Transverse colon (tissue), 4 donors: ENCODE measurements at regions of chr4 and their contacts with region 1.

Region 1: DNA sequence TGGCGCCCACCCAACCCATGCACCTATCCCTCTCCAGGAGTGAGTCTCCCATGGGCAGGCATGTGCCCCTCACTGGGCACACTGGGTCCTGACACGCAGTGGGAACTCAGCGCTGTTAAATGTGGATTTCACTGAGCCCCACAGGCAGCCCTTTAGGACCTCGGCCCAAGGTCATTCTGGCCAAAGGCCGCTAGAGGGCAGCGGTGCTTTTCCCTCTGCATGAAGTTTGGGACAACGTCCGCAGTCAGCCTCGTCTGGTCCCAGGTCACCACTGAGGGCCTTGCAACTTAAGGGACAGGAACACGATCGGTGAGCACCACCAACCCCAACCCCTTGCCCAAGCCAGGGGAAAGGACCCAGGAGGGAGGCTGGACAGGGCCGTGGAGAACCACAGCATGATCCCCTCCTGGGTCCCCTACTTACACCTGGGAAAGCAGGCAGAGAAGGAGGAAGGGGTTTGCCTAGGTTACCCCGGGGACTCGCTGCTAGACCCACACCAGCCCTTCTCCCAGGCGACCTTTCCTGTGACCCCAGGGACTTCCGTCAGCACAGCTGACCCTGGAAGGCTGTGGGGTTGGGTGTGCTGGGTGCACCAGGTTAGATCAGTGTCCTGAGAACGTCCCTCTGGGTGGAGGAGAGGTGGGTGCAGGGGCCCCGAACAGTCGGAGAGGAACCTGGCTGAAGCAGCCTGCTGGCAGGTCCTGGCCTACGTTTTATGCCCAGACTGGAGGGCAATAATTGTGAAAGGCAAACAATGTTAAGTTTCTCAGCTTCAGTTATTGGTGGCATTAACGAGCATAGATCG is 24.0 kb downstream of the CYTL1 start:
- DNase-seq: peak; percentile 66
- H3K4me3 ChIP-seq: no peak overlapping the region
- H3K27ac ChIP-seq: no peak overlapping the region
- H3K4me1 ChIP-seq: peaks cover 5 to 14% (median 9%) of the 10 kb centered on the region in 4 donors
- H3K27me3 ChIP-seq: no peaks in the 10 kb centered on the region
- CTCF ChIP-seq: peak; percentile 75 to 88 (median 82)
- EP300 ChIP-seq: no peak
- POLR2A ChIP-seq: no peak

Region 2: GRCh38 chr4:4935974-4936373 is 59.3 kb before region 1 on chr4:
- in situ Hi-C with region 1: no loop called
- intact Hi-C with region 1: loop called (anchors 2 kb)
- DNase-seq: no peak
- H3K4me3 ChIP-seq: no peak overlapping the region
- H3K27ac ChIP-seq: no peak overlapping the region
- H3K4me1 ChIP-seq: no peaks in the 10 kb centered on the region
- H3K27me3 ChIP-seq: no peaks in the 10 kb centered on the region
- CTCF ChIP-seq: no peak
- EP300 ChIP-seq: no peak
- POLR2A ChIP-seq: no peak

Region 3: GRCh38 chr4:5014007-5014682 is 18.8 kb after region 1 on chr4:
- in situ Hi-C with region 1: no loop called
- intact Hi-C with region 1: no loop called
- DNase-seq: no peak
- H3K4me3 ChIP-seq: no peak overlapping the region
- H3K27ac ChIP-seq: no peak overlapping the region
- H3K4me1 ChIP-seq: peaks cover 0 to 2% (median 0%) of the 10 kb centered on the region in 4 donors
- H3K27me3 ChIP-seq: peaks cover 12% of the 10 kb centered on the region
- CTCF ChIP-seq: no peak
- EP300 ChIP-seq: no peak
- POLR2A ChIP-seq: no peak

Region 4: DNA sequence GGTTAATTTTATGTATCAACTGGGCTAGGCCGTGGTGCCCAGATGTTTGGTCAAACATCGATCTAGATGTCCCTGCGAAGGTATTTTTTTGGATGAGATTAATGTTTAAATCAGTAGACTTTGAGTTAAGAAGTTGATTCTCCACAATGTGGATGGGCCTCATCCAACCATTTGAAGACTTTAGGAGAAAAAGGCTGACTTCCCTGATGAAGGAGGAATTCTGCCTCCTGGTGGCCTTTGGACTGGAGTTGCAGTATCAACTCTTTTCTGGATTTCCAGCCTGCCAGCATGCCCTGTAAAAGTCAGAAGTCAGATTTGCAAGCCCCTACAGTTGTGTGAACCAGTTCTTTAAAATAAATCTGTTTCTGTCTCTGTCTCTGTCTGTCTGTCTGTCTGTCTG is 147.4 kb after region 1 on chr4:
- in situ Hi-C with region 1: no loop called
- intact Hi-C with region 1: loop called (anchors 10 kb)
- DNase-seq: peak; percentile 21
- H3K4me3 ChIP-seq: no peak overlapping the region
- H3K27ac ChIP-seq: no peak overlapping the region
- H3K4me1 ChIP-seq: peaks cover 0 to 4% (median 0%) of the 10 kb centered on the region in 4 donors
- H3K27me3 ChIP-seq: no peaks in the 10 kb centered on the region
- CTCF ChIP-seq: peak in 4 of 5 experiments; percentile 14 to 40 (median 32)
- EP300 ChIP-seq: no peak
- POLR2A ChIP-seq: no peak

Region 5: DNA sequence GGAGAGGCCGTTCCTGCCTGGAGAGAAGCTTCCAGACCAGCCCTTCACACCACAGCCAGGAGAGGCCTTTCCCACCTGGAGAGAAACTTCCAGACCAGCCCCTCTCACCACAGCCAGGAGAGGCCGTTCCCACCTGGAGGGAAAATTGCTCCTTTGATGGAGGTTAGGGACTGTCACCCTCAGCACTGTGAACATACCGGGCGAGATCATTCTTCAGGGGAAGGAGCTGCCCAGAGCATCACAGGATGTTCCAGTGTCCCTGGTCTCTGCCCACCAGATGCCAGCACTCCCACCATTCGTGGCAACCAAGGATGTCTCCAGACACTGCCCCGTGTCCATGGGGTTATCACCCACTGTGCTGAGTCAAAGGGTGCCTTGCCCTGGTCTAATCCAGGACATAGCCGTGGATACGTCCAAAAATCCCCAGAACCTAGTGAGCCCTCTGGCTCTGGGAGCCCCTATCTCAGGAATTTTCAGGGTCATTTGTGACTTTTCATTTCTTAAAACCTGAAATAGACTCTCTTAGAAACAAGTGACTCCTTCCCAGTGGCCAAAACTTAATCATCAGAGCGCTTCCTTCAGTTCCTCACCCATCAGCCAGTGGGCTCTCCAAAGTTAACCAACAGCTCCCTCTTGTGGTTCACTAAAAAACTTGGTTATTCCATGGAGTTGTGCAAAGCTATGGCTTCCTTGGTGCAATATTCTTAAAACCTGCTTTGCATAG is 817.4 kb after region 1 on chr4:
- in situ Hi-C with region 1: loop called in 1 of 4 experiments (anchors 25 kb)
- intact Hi-C with region 1: no loop called
- DNase-seq: no peak
- H3K4me3 ChIP-seq: no peak overlapping the region
- H3K27ac ChIP-seq: no peak overlapping the region
- H3K4me1 ChIP-seq: no peaks in the 10 kb centered on the region
- H3K27me3 ChIP-seq: no peaks in the 10 kb centered on the region
- CTCF ChIP-seq: peak; percentile 57 to 66 (median 61)
- EP300 ChIP-seq: no peak
- POLR2A ChIP-seq: no peak